AG04449 (cell line): ENCODE measurements at regions of chr1 and their contacts with region 1.

Region 1: DNA sequence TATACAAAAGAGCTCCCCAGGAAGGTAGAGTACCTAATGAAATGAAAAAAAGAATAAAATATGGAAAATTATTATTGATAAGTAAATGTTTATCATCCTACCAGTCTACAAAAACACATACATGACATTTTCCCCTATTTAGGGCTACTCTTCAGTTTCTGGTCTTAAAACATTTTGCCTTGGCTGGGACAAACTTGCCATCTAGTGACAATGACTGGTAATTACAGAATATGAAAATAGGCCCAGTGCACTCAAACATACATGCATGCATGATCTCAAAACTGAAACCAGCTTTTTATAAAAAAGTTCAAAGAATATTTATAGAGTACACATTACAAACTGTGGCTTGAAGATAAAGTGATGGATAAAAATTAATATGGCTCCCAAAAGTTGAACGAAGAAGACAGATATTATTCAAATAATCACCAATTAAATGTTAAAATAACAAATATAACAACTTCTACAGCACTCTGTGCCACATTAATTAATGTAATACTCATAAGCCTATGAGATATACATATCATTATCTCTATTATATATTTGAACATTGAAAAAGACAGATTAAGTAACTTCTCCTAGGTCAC is 10.5 kb upstream of the RNPC3 start:
- DNase-seq: no peak
- H3K4me3 ChIP-seq: no peak overlapping the region
- CTCF ChIP-seq: peak; percentile 49

Region 2: GRCh38 chr1:101520302-101520701 is 1994.7 kb before region 1 on chr1:
- CTCF ChIA-PET with region 1: interaction called, 11 read pairs
- POLR2A ChIA-PET with region 1: no interaction called
- DNase-seq: no peak
- H3K4me3 ChIP-seq: no peak overlapping the region
- CTCF ChIP-seq: peak; percentile 61

Region 3: GRCh38 chr1:103106426-103107341 is 408.3 kb before region 1 on chr1:
- CTCF ChIA-PET with region 1: interaction called, 22 read pairs
- POLR2A ChIA-PET with region 1: no interaction called
- DNase-seq: no peak
- H3K4me3 ChIP-seq: peak overlapping the region; percentile 73
- CTCF ChIP-seq: peak; percentile 11

Region 4: GRCh38 chr1:103496014-103496635 is 18.9 kb before region 1 on chr1:
- CTCF ChIA-PET with region 1: interaction called, 19 read pairs
- POLR2A ChIA-PET with region 1: no interaction called
- DNase-seq: no peak
- H3K4me3 ChIP-seq: no peak overlapping the region
- CTCF ChIP-seq: no peak

Region 5: DNA sequence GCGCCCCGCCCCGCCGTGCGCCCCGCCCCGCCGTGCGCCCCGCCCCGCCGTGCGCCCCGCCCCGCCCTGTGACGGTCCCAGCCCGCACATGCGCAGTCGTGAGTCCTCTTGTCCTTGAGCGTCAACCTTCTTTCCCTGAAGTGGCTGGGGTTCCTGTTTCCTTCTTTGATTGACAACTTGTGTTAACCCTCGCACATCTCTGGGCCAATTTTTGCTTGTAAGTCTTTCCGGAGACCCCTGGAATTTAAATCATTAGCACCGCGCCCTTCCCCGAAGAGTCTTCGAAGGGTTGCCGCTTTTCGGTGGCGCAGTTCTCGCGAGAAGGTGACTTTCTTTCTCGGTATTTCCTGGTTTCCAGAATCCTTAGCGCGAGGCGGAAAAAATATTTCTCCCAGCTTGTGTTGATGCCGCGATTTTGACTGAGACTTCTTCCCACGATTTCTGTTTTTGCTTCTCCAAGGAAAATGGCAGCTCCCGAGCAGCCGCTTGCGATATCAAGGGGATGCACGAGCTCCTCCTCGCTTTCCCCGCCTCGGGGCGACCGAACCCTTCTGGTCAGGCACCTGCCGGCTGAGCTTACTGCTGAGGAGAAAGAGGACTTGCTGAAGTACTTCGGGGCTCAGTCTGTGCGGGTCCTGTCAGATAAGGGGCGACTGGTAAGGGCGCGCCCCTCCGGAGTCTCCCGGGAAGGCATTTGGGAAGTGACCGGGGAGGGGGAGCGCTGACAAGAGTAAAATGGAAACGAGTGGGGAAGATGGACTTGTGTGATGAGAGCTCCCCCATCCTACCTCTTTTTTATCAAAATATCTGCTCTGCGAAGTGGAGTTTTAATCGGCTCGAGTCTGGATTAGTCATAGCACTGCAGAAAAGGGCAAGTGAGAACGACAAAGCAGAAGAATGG is 10.8 kb after region 1 on chr1 and contains the start of gene RNPC3:
- CTCF ChIA-PET with region 1: interaction called, 30 read pairs
- POLR2A ChIA-PET with region 1: no interaction called
- DNase-seq: no peak
- H3K4me3 ChIP-seq: peak within 1 kb of the TSS; percentile 89
- CTCF ChIP-seq: no peak

Region 6: GRCh38 chr1:103547840-103548239 is 32.8 kb after region 1 on chr1:
- CTCF ChIA-PET with region 1: no interaction called
- POLR2A ChIA-PET with region 1: no interaction called
- DNase-seq: no peak
- H3K4me3 ChIP-seq: no peak overlapping the region
- CTCF ChIP-seq: no peak